Mucosa of descending colon (tissue), 3 donors: ENCODE measurements at regions of chr6 and their contacts with region 1.

Region 1: DNA sequence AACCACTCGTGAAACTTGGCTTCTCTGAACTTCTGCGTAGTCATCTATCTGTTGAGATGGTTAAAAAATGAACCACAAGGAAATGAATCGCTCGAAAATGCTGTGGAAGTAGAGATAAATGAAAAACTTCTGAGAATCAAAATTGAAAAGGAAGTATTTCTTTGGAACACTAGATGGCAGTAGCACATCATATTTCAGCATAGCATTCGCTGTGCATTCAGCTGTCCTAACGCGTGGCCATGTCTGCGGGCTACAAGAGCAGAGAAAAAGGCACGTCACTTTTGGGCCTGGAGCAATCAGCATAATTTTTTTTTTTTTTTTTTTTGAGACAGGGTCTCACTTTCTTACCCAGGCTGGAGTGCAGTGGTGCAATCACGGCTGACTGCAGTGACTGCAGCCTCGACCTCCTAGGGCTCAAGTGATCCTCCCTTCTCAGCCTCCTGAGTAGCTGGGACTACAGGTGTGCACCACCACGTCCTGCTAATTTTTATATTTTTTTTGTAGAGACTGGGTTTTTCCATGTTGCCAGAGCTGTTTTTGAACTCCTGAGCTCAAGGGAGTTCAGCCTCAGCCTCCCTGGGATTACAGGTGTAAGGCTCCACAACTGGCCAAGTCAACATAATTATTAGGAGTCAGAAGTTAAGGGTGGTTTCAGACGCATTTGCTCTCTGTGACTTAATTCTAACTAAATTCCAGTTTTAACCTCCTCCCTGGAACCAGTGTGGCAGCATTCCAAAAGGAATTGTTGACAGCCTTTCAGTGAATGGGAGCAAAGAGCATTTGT is 8.8 kb upstream of the PERP start:
- DNase-seq: peak in 1 of 3 donors; percentile 59
- ATAC-seq: peak; percentile 90
- H3K4me3 ChIP-seq: no peak overlapping the region
- H3K4me1 ChIP-seq: no peaks in the 10 kb centered on the region
- CTCF ChIP-seq: peak; percentile 25

Region 2: DNA sequence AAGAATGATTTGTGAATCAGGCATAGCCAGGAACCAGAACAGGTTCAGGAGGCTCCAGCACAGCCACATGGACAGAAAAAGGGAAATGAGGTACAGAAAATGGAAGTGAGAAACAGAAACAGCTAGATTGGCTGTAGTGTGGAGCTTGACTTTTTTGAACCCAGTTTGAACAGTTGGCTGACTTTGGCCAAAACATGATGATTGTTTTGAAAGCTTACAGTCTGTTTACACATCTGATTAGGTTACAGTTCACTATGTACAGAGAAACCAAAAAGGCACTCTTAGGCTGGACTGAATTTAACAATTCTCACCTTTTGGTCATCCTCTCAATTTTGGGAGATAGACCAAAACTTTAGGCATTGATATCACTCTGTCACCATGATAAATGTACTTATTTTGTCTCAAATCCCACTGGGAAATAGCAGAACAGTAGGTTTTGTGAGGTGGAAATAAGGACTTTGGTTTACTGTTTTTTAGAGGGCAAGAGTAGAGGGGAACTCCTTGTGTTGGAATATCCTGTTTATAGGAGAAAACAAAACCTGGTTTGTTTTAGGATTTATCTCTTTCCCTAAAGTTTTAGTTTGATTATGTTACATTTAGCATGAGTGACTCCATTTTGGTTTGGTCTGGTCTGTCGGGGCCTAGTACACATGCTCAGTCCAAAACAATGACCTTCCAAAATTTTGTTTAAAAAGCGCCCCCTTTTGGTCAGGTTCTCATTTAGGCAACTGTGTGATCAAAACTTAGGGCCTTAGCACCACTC is 745.0 kb before region 1 on chr6:
- intact Hi-C with region 1: no loop called
- DNase-seq: no peak
- ATAC-seq: peak; percentile 35
- H3K4me3 ChIP-seq: no peak overlapping the region
- H3K4me1 ChIP-seq: no peaks in the 10 kb centered on the region
- CTCF ChIP-seq: no peak

Region 3: DNA sequence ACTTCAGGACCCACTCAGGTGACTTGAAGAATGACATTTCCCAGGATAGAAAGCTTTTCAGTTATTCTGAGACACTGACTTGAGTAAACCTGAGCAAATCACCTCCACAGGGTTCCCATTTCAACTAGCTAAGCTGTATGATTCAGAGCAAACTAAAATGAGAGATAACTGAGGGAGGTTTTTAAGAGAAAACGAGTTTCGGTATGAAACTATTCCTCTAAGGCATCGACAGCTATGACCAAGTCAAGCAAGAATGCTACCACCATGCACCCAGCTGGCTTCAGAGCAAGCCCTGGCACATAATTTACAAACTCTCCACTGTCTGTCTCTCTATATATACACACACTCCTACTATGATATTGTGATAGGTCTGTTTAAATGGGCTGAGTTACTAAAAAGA is 84.2 kb before region 1 on chr6:
- intact Hi-C with region 1: no loop called
- DNase-seq: no peak
- ATAC-seq: no peak
- H3K4me3 ChIP-seq: no peak overlapping the region
- H3K4me1 ChIP-seq: no peaks in the 10 kb centered on the region
- CTCF ChIP-seq: no peak

Region 4: DNA sequence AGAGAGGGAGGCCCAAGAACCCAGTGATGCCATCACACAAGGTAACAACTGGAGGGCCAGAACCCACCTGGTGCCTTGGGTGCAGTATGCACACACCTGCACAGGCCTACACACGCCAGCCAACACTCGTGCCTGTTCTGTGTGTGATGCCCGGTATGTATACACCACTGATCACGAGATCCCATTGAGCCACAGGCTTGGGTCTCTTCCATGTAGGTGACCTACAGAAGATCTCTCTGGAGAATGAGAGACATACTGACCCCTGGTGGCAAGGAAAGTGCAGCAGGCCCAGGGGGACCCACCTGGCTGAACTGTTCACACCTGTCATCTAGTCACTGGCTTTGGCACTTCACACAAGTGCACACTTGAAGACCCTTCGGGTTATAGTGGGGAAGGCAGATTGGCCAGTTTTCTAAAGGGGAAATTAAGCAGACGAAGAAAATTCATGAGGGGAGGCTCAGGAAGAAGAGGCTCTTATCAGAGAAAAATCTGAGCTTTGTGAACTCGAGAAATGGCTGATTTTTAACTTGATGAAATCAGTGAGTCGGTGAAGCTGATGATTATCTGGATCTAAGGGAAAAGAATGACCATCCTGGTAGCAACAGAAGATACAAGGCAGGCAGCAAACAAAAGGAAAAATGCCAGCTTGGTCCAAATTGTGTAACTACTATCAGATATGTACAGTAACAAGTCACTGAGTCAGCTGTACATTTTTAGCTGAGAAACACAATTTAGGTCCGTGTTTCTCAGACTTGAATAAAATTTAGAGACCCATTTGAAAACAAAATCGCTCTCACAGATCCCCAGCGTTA is 171.3 kb after region 1 on chr6:
- intact Hi-C with region 1: loop called (anchors 5 kb)
- DNase-seq: peak in 2 of 3 donors; percentile 72 to 88
- ATAC-seq: peak; percentile 85
- H3K4me3 ChIP-seq: no peak overlapping the region
- H3K4me1 ChIP-seq: no peaks in the 10 kb centered on the region
- CTCF ChIP-seq: peak; percentile 72

Region 5: GRCh38 chr6:138403801-138404661 is 288.0 kb after region 1 on chr6 and contains the start of gene HEBP2:
- intact Hi-C with region 1: loop called in 1 of 2 experiments (anchors 10 kb)
- DNase-seq: peak; percentile 98 to 99 (median 98)
- ATAC-seq: peak; percentile 94
- H3K4me3 ChIP-seq: peak within 1 kb of the TSS; percentile 84
- H3K4me1 ChIP-seq: peaks cover 12% of the 10 kb centered on the region
- CTCF ChIP-seq: peak; percentile 25
- total RNA-seq, gene HEBP2: 78.5 to 101 (median 88.7) TPM

Region 6: DNA sequence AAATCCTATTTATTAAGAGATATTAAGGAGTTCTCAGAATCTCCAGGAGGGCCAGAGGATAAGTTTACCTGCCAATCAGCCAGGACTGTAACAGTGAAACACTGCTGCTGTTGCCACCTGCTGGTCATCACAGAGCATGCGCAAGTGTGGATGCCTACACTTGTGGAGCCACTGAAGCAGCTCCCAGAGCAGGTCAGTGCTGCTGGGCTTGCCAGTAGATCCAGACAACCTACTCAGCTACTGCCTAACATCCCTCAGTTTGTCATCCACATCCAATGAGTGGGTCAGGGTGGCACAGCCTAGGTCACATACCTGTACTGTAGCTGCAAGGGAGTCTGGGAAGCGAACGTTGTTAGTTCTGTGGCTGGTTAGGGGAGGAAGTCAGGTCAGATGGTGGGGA is 401.6 kb after region 1 on chr6:
- intact Hi-C with region 1: loop called in 1 of 2 experiments (anchors 10 kb)
- DNase-seq: peak in 2 of 3 donors; percentile 67 to 75
- ATAC-seq: peak; percentile 94
- H3K4me3 ChIP-seq: no peak overlapping the region
- H3K4me1 ChIP-seq: no peaks in the 10 kb centered on the region
- CTCF ChIP-seq: peak; percentile 66

Region 7: GRCh38 chr6:139271056-139271455 is 1155.0 kb after region 1 on chr6:
- intact Hi-C with region 1: no loop called
- DNase-seq: no peak
- ATAC-seq: peak; percentile 72
- H3K4me3 ChIP-seq: no peak overlapping the region
- H3K4me1 ChIP-seq: no peaks in the 10 kb centered on the region
- CTCF ChIP-seq: no peak